Heart right ventricle (tissue), 16 donors: ENCODE measurements at regions of chr18 and their contacts with region 1.

Region 1: GRCh38 chr18:67104700-67105284 is 411.7 kb downstream of the DSEL start:
- DNase-seq: peak in 1 of 2 donors; percentile 23
- ATAC-seq: peak in 4 of 8 donors; percentile 37 to 87 (median 70)
- H3K4me3 ChIP-seq: no peak overlapping the region
- H3K27ac ChIP-seq: no peak overlapping the region
- H3K4me1 ChIP-seq: no peaks in the 10 kb centered on the region
- H3K27me3 ChIP-seq: no peaks in the 10 kb centered on the region
- CTCF ChIP-seq: peak in 8 of 9 donors; percentile 33 to 68 (median 57)

Region 2: GRCh38 chr18:67001052-67001451 is 103.7 kb before region 1 on chr18:
- intact Hi-C with region 1: no loop called
- DNase-seq: no peak
- ATAC-seq: no peak
- H3K4me3 ChIP-seq: no peak overlapping the region
- H3K27ac ChIP-seq: no peak overlapping the region
- H3K4me1 ChIP-seq: no peaks in the 10 kb centered on the region
- H3K27me3 ChIP-seq: no peaks in the 10 kb centered on the region
- CTCF ChIP-seq: no peak

Region 3: DNA sequence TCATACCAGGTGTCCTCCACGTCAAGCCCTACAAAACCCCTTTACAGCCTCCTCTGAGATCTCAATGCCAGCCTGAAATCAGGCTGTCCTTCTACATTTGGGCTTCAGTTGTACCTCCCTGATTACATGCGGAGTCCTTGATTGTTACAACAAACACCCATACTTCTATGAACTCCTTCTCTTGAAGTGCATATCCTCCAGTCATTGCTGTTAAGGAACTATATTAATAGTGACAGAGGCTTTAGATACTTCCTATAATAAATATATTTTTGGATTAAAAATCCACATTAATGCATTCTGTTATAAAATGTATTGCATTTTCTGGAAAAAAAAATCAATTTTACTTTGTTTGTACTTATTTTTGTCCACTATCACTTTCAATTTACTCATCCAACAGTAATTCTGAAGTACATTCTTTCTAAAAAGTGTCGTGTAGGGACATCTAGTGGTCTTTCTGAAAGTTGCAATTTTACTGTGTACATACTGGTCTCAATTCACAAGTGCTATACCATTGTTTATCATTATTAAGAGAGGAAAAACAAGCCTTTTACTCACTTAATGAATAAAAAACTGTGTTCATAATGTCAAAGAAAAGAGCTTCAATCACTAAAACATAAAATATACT is 95.3 kb after region 1 on chr18:
- intact Hi-C with region 1: loop called in 8 of 10 experiments (anchors 1 to 10 kb)
- DNase-seq: no peak
- ATAC-seq: no peak
- H3K4me3 ChIP-seq: no peak overlapping the region
- H3K27ac ChIP-seq: no peak overlapping the region
- H3K4me1 ChIP-seq: no peaks in the 10 kb centered on the region
- H3K27me3 ChIP-seq: peaks cover 0 to 26% (median 3%) of the 10 kb centered on the region in 7 donors
- CTCF ChIP-seq: peak in 8 of 9 donors; percentile 33 to 76 (median 64)

Region 4: DNA sequence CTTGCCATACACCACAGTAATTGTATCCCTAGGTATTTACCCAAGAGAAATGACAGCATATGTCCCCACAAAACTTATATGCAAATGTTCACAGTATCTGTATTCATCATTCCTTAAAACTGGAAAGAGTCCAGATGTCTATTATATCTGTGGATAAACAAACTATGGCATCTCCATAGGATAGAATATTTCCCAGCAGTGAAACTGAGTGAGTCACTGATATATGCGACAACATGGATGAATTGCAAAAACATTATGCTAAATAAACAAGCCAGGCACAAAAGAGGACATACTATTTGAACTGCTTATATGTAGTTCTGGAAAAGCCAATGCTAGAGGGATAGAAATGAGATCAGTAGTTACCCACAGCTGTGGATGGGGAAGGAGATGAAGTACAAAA is 771.2 kb after region 1 on chr18:
- intact Hi-C with region 1: no loop called
- DNase-seq: no peak
- ATAC-seq: no peak
- H3K4me3 ChIP-seq: no peak overlapping the region
- H3K27ac ChIP-seq: no peak overlapping the region
- H3K4me1 ChIP-seq: no peaks in the 10 kb centered on the region
- H3K27me3 ChIP-seq: no peaks in the 10 kb centered on the region
- CTCF ChIP-seq: no peak